Sciatic nerve (tissue), 2 donors: ENCODE measurements at regions of chr9 and their contacts with region 1.

Region 1: GRCh38 chr9:93215782-93216365 is 31.9 kb downstream of the WNK2 start:
- DNase-seq: no peak
- ATAC-seq: no peak

Region 2: DNA sequence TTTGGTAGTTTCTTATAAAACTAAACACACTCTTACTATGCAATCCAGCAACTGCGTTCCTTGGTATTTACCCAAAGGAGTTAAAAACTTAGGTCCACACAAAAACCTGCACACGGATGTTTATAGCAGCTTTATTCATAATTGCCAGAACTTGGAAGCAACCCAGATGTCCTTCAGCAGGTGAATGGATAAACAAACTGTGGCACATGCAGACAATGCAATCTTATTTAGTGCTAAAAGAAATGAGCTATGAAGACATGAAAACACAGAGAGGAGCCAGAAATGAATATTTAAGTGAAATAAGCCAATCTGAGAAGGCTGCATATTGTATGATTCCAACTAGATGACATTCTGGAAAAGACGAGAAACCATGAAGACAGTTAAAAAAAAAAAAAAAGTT is 21.2 kb before region 1 on chr9:
- intact Hi-C with region 1: loop called (anchors 1 kb)
- DNase-seq: no peak
- ATAC-seq: no peak